Mammary epithelial cell (primary cell): ENCODE measurements at regions of chr14 and their contacts with region 1.

Region 1: GRCh38 chr14:96198430-96199130 is 6.1 kb upstream of the BDKRB2 start:
- DNase-seq: no peak
- H3K4me3 ChIP-seq: no peak overlapping the region
- H3K27ac ChIP-seq: no peak overlapping the region
- H3K4me1 ChIP-seq: peaks cover 9% of the 10 kb centered on the region
- H3K27me3 ChIP-seq: no peaks in the 10 kb centered on the region
- CTCF ChIP-seq: no peak

Region 2: GRCh38 chr14:96051642-96052540 is 146.7 kb before region 1 on chr14:
- CTCF ChIA-PET with region 1: no interaction called
- dilution Hi-C with region 1: no loop called
- in situ Hi-C with region 1: no loop called
- intact Hi-C with region 1: no loop called
- DNase-seq: peak; percentile 19
- H3K4me3 ChIP-seq: no peak overlapping the region
- H3K27ac ChIP-seq: no peak overlapping the region
- H3K4me1 ChIP-seq: no peaks in the 10 kb centered on the region
- H3K27me3 ChIP-seq: peaks cover 4% of the 10 kb centered on the region
- CTCF ChIP-seq: peak; percentile 31 to 34

Region 3: DNA sequence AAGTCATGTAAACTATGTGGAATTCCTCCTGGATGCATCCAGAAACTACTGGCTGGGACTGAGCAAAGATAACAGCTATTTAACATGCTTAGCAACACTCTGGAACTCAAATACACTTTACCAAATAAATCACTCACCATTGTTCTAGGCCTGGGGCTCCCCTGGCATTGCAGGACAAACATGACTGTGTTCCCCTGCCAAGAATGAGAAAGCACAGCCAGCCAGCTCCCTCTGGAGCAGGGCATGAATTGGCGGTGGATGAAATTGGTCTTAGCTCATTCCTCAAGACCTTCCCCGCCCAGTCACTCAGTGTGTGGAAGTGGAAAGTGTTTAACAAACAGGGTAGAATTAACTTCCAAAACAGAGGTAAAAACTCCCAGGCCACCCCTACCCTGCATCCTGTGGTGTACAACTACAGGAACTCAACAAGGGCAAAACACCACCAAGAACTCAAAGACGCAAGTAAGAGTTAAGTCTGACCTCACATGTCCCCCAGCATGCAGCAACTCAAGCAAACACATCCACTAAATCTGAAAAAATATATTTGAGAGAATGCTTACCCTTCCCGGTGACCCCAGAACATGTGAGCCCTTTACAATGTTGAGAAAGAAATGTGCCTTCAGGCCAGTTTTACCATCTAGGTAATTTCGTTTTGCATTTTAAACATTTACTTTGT is 52.3 kb before region 1 on chr14:
- CTCF ChIA-PET with region 1: no interaction called
- dilution Hi-C with region 1: loop called (anchors 5 kb)
- in situ Hi-C with region 1: no loop called
- intact Hi-C with region 1: no loop called
- DNase-seq: peak; percentile 29
- H3K4me3 ChIP-seq: no peak overlapping the region
- H3K27ac ChIP-seq: no peak overlapping the region
- H3K4me1 ChIP-seq: no peaks in the 10 kb centered on the region
- H3K27me3 ChIP-seq: no peaks in the 10 kb centered on the region
- CTCF ChIP-seq: no peak

Region 4: GRCh38 chr14:96338551-96338950 is 140.0 kb after region 1 on chr14:
- CTCF ChIA-PET with region 1: no interaction called
- dilution Hi-C with region 1: no loop called
- in situ Hi-C with region 1: no loop called
- intact Hi-C with region 1: no loop called
- DNase-seq: no peak
- H3K4me3 ChIP-seq: no peak overlapping the region
- H3K27ac ChIP-seq: no peak overlapping the region
- H3K4me1 ChIP-seq: no peaks in the 10 kb centered on the region
- H3K27me3 ChIP-seq: no peaks in the 10 kb centered on the region
- CTCF ChIP-seq: no peak